Activated CD4-positive, alpha-beta T cell treated with anti-CD3 and anti-CD28 coated beads for 36 hours (primary cell): ENCODE measurements at regions of chr3 and their contacts with region 1.

Region 1: GRCh38 chr3:59559721-59560435 is 510.1 kb upstream of the CFAP20DC start:
- DNase-seq: peak; percentile 67
- ATAC-seq: peak; percentile 92
- H3K4me3 Mint-ChIP-seq: no peak overlapping the region
- H3K27ac Mint-ChIP-seq: peak overlapping the region; percentile 93
- H3K4me1 Mint-ChIP-seq: peaks cover 37% of the 10 kb centered on the region
- H3K27me3 Mint-ChIP-seq: no peaks in the 10 kb centered on the region

Region 2: DNA sequence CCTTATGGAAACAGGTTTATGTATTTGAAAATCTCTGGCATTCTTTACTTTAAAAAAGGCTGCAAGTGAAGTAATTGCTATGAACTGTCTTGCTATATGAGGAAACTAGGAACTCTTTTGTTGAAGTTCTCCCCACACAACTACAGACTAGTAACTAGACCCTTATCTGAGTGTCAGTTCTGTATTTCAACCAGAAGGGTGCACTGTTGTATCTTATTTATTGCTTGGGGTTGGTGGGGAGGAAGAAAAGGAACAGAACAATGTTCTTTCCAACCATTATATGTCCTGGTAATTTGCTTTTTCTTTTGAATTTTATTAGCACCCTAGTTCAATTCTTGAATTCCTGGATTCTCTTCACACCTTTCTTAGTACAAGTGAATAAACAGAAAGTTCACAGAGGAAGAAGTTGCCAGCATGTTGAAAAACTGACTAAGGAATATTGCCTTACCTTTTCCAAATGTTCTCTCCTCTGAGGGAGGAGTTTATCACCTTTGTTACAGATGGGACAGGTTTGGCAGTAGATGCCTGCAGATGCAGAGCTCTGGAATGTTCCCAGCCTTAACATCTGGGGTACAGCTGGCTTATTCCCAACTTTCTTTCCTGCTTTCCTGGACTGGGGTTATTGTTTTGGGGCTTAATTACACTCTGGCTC is 347.6 kb before region 1 on chr3:
- CTCF ChIA-PET with region 1: no interaction called
- POLR2A ChIA-PET with region 1: no interaction called
- intact Hi-C with region 1: loop called in 1 of 2 experiments (anchors 5 kb)
- DNase-seq: no peak
- ATAC-seq: peak; percentile 74
- H3K4me3 Mint-ChIP-seq: no peak overlapping the region
- H3K27ac Mint-ChIP-seq: no peak overlapping the region
- H3K4me1 Mint-ChIP-seq: peaks cover 6% of the 10 kb centered on the region
- H3K27me3 Mint-ChIP-seq: peaks cover 12% of the 10 kb centered on the region

Region 3: DNA sequence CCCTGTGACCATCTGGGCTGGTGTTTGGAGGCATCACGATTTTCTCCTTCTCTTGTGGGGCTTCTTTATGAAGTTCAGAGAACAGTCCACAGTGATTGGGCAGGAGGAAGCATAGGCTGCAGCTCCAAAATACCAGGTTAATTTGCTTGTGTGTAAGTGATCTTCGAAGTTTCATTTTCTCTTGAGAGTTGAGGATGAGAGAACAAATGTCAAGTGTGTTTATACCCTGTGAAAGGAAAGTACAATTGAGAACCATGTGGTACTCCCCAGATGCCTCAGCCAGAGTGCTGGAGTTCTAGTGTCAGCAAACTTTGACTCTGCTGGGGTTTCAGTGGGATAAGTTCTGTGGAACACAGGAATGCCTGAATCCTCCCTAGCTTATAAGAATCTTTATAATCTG is 152.9 kb before region 1 on chr3:
- CTCF ChIA-PET with region 1: no interaction called
- POLR2A ChIA-PET with region 1: no interaction called
- intact Hi-C with region 1: no loop called
- DNase-seq: no peak
- ATAC-seq: peak; percentile 73
- H3K4me3 Mint-ChIP-seq: no peak overlapping the region
- H3K27ac Mint-ChIP-seq: peak overlapping the region; percentile 26
- H3K4me1 Mint-ChIP-seq: peaks cover 22% of the 10 kb centered on the region
- H3K27me3 Mint-ChIP-seq: no peaks in the 10 kb centered on the region

Region 4: DNA sequence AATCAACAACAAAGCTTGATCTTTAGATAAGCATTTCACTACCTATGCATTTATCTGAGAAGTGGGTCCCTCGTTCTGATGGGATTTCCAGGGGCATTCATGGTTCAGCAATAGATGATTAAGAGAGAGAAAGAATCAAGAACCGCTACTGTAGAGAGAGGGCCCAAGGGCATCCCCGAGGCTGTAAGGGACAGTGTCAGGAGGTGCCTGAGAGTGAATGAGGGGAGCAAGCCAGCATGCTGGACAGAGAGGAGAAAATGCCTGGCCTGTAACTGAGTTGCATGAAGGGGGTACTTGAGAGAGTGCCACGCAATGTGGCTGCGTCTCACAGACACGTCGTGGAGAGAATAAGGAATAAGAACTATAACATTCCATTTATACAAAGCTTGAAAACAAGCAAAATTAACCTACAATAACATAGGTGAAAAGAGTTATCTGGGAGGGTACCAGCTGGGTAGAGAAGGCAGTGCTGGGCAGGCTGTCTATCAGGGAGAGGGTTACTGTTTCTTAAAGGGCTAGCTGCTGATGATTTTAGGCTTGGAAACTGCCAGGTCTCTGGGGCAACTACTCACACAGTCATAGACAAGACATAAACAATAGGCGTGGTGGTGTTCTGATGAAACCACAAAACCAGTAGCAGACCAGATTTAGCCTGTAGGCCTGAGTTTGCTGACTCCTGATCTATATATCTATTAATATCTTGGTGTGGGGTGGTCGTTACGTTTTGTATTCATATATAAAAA is 135.4 kb before region 1 on chr3:
- CTCF ChIA-PET with region 1: interaction called, 3 read pairs
- POLR2A ChIA-PET with region 1: no interaction called
- intact Hi-C with region 1: loop called (anchors 1 kb)
- DNase-seq: peak; percentile 35
- ATAC-seq: no peak
- H3K4me3 Mint-ChIP-seq: peak overlapping the region; percentile 8
- H3K27ac Mint-ChIP-seq: peak overlapping the region; percentile 68
- H3K4me1 Mint-ChIP-seq: peaks cover 74% of the 10 kb centered on the region
- H3K27me3 Mint-ChIP-seq: peaks cover 10% of the 10 kb centered on the region

Region 5: DNA sequence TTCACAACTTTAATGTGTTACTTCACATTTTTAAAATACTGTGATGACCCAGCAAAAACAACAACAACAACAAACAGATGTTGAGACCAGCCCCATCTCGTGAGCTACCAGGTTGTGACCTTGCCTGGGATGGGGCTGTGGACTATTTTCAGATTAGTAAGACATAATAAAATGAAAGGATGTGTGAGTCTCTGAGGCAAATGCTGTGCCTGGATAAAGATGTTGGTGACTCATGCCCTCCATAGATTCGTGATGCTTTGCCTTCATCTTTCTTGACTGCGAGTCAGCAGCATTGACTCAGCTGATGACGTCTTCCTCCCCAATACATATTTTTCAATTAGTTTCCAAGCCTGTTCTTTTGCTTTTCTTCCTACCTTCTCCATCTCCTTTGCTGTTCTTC is 57.1 kb before region 1 on chr3:
- CTCF ChIA-PET with region 1: no interaction called
- POLR2A ChIA-PET with region 1: no interaction called
- intact Hi-C with region 1: loop called in 1 of 2 experiments (anchors 2 kb)
- DNase-seq: peak; percentile 71
- ATAC-seq: peak; percentile 97
- H3K4me3 Mint-ChIP-seq: no peak overlapping the region
- H3K27ac Mint-ChIP-seq: no peak overlapping the region
- H3K4me1 Mint-ChIP-seq: peaks cover 10% of the 10 kb centered on the region
- H3K27me3 Mint-ChIP-seq: no peaks in the 10 kb centered on the region

Region 6: DNA sequence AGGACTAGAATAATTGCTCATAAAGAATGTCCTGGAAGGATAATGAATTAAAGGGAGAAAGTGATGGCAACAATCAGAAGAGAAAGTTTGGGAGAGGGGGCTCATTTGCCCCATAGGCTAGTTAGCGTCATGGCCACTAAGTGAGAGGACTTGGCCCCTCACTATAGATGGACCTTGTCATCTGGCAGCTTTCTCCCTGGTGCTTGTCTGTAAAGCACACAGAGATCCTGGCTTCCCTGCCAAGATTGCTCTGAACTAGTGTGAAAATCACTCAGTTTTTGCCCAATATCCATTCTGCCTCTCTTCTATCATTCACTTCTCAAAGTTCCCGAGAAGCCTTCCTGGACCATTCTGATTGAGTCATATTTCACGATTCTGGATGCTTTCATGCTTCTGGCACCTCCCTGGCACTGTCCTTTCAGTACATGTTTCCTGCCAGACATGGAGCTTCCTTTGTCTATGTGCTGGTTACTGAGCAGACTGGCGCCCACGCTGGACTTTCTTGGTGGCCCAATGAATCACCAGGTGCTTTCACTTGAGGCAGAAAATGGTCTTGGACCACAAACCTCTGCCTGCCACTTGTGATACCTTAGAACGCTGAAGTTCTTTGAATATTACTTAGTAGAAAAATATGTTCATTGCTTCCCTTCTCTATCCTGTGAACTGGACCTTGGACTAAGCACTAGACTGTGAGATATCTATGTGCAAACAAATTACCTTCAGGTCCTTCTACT is 199.6 kb after region 1 on chr3:
- CTCF ChIA-PET with region 1: no interaction called
- POLR2A ChIA-PET with region 1: no interaction called
- intact Hi-C with region 1: loop called in 1 of 2 experiments (anchors 1 kb)
- DNase-seq: peak; percentile 81
- ATAC-seq: peak; percentile 78
- H3K4me3 Mint-ChIP-seq: no peak overlapping the region
- H3K27ac Mint-ChIP-seq: peak overlapping the region; percentile 10
- H3K4me1 Mint-ChIP-seq: peaks cover 74% of the 10 kb centered on the region
- H3K27me3 Mint-ChIP-seq: no peaks in the 10 kb centered on the region

Region 7: DNA sequence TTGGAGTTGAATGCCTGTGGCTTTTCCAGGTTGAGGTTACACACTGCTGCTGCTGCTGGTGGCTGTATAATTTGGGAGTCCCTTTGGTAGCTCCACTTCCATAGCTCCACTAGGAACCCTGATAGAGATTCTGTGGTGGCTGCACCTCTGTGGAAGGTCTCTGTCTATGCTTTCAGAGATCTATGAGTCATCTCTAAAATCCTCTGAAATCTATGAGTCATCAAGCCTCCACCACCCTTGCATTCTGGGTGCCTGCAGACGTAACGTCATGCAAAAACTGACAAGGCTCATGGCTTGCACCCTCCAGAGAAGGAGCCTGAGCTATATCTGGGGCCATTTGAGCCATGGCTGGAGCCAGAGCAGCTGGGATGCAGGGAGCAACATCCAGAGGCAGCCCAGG is 526.9 kb after region 1 on chr3:
- CTCF ChIA-PET with region 1: no interaction called
- POLR2A ChIA-PET with region 1: no interaction called
- intact Hi-C with region 1: loop called in 1 of 2 experiments (anchors 10 kb)
- DNase-seq: peak; percentile 74
- ATAC-seq: peak; percentile 96
- H3K4me3 Mint-ChIP-seq: no peak overlapping the region
- H3K27ac Mint-ChIP-seq: peak overlapping the region; percentile 84
- H3K4me1 Mint-ChIP-seq: peaks cover 55% of the 10 kb centered on the region
- H3K27me3 Mint-ChIP-seq: no peaks in the 10 kb centered on the region